CD4-positive, alpha-beta T cell (primary cell): ENCODE measurements at regions of chr2 and their contacts with region 1.

Region 1: GRCh38 chr2:239267288-239267951 is 133.4 kb downstream of the HDAC4 start:
- DNase-seq: peak; percentile 80 to 97 (median 90)
- ATAC-seq: peak; percentile 74
- H3K4me3 ChIP-seq: peak overlapping the region; percentile 68
- H3K4me3 Mint-ChIP-seq: peak overlapping the region; percentile 91
- H3K27ac ChIP-seq: peak overlapping the region; percentile 73 to 83
- H3K27ac Mint-ChIP-seq: peak overlapping the region; percentile 95
- H3K4me1 ChIP-seq: peaks cover 80% of the 10 kb centered on the region
- H3K4me1 Mint-ChIP-seq: peaks cover 81% of the 10 kb centered on the region
- H3K27me3 ChIP-seq: no peaks in the 10 kb centered on the region
- H3K27me3 Mint-ChIP-seq: no peaks in the 10 kb centered on the region
- CTCF ChIP-seq: peak; percentile 69

Region 2: GRCh38 chr2:238475566-238475965 is 791.9 kb before region 1 on chr2:
- CTCF ChIA-PET with region 1: no interaction called
- POLR2A ChIA-PET with region 1: no interaction called
- intact Hi-C with region 1: no loop called
- DNase-seq: no peak
- ATAC-seq: no peak
- H3K4me3 ChIP-seq: no peak overlapping the region
- H3K4me3 Mint-ChIP-seq: no peak overlapping the region
- H3K27ac ChIP-seq: no peak overlapping the region
- H3K27ac Mint-ChIP-seq: no peak overlapping the region
- H3K4me1 ChIP-seq: no peaks in the 10 kb centered on the region
- H3K4me1 Mint-ChIP-seq: no peaks in the 10 kb centered on the region
- H3K27me3 ChIP-seq: no peaks in the 10 kb centered on the region
- H3K27me3 Mint-ChIP-seq: no peaks in the 10 kb centered on the region
- CTCF ChIP-seq: no peak

Region 3: DNA sequence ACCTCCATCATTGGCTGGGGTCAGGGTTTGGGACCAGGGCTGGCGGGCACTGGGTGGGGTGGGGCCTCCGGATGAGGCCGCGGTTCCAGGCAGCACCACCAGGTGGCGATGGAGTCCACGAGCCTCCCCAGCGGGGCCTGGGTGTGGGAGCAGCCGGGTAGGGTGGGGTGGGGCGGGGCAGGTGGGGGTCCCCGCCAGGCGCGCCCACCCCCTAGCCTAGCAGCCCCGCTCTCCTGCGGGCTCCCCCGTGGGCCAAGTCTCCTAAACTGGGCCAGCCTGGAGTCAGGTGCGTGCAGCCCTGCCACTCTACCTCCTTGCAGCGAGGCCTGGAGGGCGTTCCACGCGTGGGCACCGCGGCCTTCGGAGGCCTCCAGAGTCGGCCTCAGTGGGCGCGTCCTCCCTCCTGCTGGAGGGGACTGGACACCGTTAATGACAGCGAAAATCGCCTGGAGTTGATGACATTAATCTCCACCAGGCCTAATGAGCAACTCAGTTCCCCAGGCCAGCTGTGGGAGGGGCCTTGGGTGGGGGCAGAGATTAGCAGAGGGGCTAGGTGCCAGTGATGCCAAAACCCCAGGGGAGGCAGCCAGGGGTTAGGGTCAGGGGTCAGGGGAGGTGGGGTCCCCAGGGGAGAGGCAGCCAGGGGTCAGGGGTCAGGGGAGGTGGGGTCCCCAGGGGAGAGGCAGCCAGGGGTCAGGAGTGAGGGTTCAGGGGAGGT is 231.9 kb before region 1 on chr2:
- CTCF ChIA-PET with region 1: no interaction called
- POLR2A ChIA-PET with region 1: no interaction called
- intact Hi-C with region 1: loop called (anchors 5 to 10 kb)
- DNase-seq: peak; percentile 47 to 78 (median 62)
- ATAC-seq: peak; percentile 92
- H3K4me3 ChIP-seq: no peak overlapping the region
- H3K4me3 Mint-ChIP-seq: no peak overlapping the region
- H3K27ac ChIP-seq: no peak overlapping the region
- H3K27ac Mint-ChIP-seq: no peak overlapping the region
- H3K4me1 ChIP-seq: peaks cover 7% of the 10 kb centered on the region
- H3K4me1 Mint-ChIP-seq: no peaks in the 10 kb centered on the region
- H3K27me3 ChIP-seq: peaks cover 8 to 13% of the 10 kb centered on the region in 2 experiments
- H3K27me3 Mint-ChIP-seq: peaks cover 8% of the 10 kb centered on the region
- CTCF ChIP-seq: peak; percentile 88

Region 4: GRCh38 chr2:239223310-239224198 is 43.9 kb before region 1 on chr2:
- CTCF ChIA-PET with region 1: interaction called, 3 read pairs
- POLR2A ChIA-PET with region 1: interaction called, 7 read pairs
- intact Hi-C with region 1: loop called in 1 of 2 experiments (anchors 5 kb)
- DNase-seq: no peak
- ATAC-seq: no peak
- H3K4me3 ChIP-seq: no peak overlapping the region
- H3K4me3 Mint-ChIP-seq: peak overlapping the region; percentile 45
- H3K27ac ChIP-seq: peak overlapping the region in 1 of 2 donors; percentile 35
- H3K27ac Mint-ChIP-seq: peak overlapping the region; percentile 84
- H3K4me1 ChIP-seq: peaks cover 63% of the 10 kb centered on the region
- H3K4me1 Mint-ChIP-seq: peaks cover 88% of the 10 kb centered on the region
- H3K27me3 ChIP-seq: no peaks in the 10 kb centered on the region
- H3K27me3 Mint-ChIP-seq: no peaks in the 10 kb centered on the region
- CTCF ChIP-seq: no peak

Region 5: DNA sequence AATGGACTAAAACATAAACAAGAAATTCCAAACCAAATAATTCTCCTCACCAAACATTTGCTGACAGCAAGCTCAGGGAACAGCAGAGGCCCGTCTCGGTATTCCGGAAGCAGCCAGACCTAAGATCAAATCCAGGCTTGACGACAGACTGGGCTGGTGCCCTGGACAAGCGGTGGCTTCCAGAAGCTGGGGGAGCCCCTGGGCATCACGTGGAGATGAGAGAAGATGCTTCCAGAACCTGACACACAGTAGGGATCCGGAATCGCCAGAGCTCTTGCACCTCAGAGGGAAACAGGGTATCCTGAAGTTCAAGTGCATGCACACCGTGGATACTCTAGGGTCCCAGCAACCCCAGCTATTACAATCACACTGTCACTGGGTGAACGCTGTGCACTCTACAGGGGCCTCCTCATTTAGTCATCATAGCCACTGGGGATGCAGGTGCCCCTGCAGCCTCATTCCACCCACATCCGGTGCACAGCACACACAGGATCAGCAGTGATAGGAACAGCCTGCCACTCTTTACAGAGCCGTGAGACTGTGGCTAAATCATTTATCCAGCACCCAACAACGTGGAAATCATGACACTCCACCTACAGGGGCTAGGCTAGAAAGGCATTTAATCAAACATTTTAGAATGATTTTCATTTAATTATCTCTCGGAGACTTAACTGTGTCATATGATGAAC is 30.8 kb after region 1 on chr2:
- CTCF ChIA-PET with region 1: interaction called, 79 read pairs
- POLR2A ChIA-PET with region 1: interaction called, 87 read pairs
- intact Hi-C with region 1: loop called (anchors 1 kb)
- DNase-seq: peak in 13 of 14 experiments; percentile 61 to 90 (median 75)
- ATAC-seq: peak; percentile 86
- H3K4me3 ChIP-seq: peak overlapping the region; percentile 58
- H3K4me3 Mint-ChIP-seq: peak overlapping the region; percentile 93
- H3K27ac ChIP-seq: peak overlapping the region; percentile 55 to 66
- H3K27ac Mint-ChIP-seq: peak overlapping the region; percentile 93
- H3K4me1 ChIP-seq: peaks cover 78% of the 10 kb centered on the region
- H3K4me1 Mint-ChIP-seq: peaks cover 82% of the 10 kb centered on the region
- H3K27me3 ChIP-seq: no peaks in the 10 kb centered on the region
- H3K27me3 Mint-ChIP-seq: no peaks in the 10 kb centered on the region
- CTCF ChIP-seq: peak; percentile 17

Region 6: GRCh38 chr2:239369631-239370161 is 102.3 kb after region 1 on chr2:
- CTCF ChIA-PET with region 1: interaction called, 20 read pairs
- POLR2A ChIA-PET with region 1: interaction called, 43 read pairs
- intact Hi-C with region 1: loop called in 1 of 2 experiments (anchors 1 kb)
- DNase-seq: peak; percentile 57 to 95 (median 72)
- ATAC-seq: peak; percentile 94
- H3K4me3 ChIP-seq: peak overlapping the region; percentile 43
- H3K4me3 Mint-ChIP-seq: peak overlapping the region; percentile 75
- H3K27ac ChIP-seq: peak overlapping the region; percentile 80 to 95
- H3K27ac Mint-ChIP-seq: no peak overlapping the region
- H3K4me1 ChIP-seq: peaks cover 44% of the 10 kb centered on the region
- H3K4me1 Mint-ChIP-seq: peaks cover 19% of the 10 kb centered on the region
- H3K27me3 ChIP-seq: no peaks in the 10 kb centered on the region
- H3K27me3 Mint-ChIP-seq: no peaks in the 10 kb centered on the region
- CTCF ChIP-seq: no peak

Region 7: GRCh38 chr2:239629926-239630617 is 362.7 kb after region 1 on chr2:
- CTCF ChIA-PET with region 1: no interaction called
- POLR2A ChIA-PET with region 1: no interaction called
- intact Hi-C with region 1: loop called in 1 of 2 experiments (anchors 10 kb)
- DNase-seq: peak in 1 of 14 experiments; percentile 23
- ATAC-seq: no peak
- H3K4me3 ChIP-seq: no peak overlapping the region
- H3K4me3 Mint-ChIP-seq: no peak overlapping the region
- H3K27ac ChIP-seq: no peak overlapping the region
- H3K27ac Mint-ChIP-seq: no peak overlapping the region
- H3K4me1 ChIP-seq: peaks cover 35% of the 10 kb centered on the region
- H3K4me1 Mint-ChIP-seq: peaks cover 32% of the 10 kb centered on the region
- H3K27me3 ChIP-seq: no peaks in the 10 kb centered on the region
- H3K27me3 Mint-ChIP-seq: no peaks in the 10 kb centered on the region
- CTCF ChIP-seq: no peak